Heart right ventricle (tissue), 16 donors: ENCODE measurements at regions of chr1 and their contacts with region 1.

Region 1: GRCh38 chr1:34786521-34787325 is 5.7 kb downstream of the GJB3 start:
- DNase-seq: peak; percentile 62 to 77
- ATAC-seq: peak; percentile 57 to 86 (median 80)
- H3K4me3 ChIP-seq: no peak overlapping the region
- H3K27ac ChIP-seq: peak overlapping the region in 1 of 10 donors; percentile 11
- H3K4me1 ChIP-seq: peaks cover 2 to 37% (median 15%) of the 10 kb centered on the region in 9 donors
- H3K27me3 ChIP-seq: peaks cover 10 to 21% (median 16%) of the 10 kb centered on the region in 7 donors
- CTCF ChIP-seq: peak; percentile 70 to 94 (median 86)

Region 2: GRCh38 chr1:34770891-34771508 is 15.7 kb before region 1 on chr1:
- intact Hi-C with region 1: no loop called
- DNase-seq: no peak
- ATAC-seq: no peak
- H3K4me3 ChIP-seq: no peak overlapping the region
- H3K27ac ChIP-seq: no peak overlapping the region
- H3K4me1 ChIP-seq: no peaks in the 10 kb centered on the region
- H3K27me3 ChIP-seq: peaks cover 0 to 40% (median 13%) of the 10 kb centered on the region in 7 donors
- CTCF ChIP-seq: no peak

Region 3: GRCh38 chr1:34844252-34844634 is 57.5 kb after region 1 on chr1:
- intact Hi-C with region 1: loop called in 1 of 10 experiments (anchors 1 kb)
- DNase-seq: peak in 1 of 2 donors; percentile 51
- ATAC-seq: peak; percentile 19 to 74 (median 50)
- H3K4me3 ChIP-seq: no peak overlapping the region
- H3K27ac ChIP-seq: peak overlapping the region; percentile 56 to 92 (median 77)
- H3K4me1 ChIP-seq: peaks cover 5 to 100% (median 64%) of the 10 kb centered on the region in 9 donors
- H3K27me3 ChIP-seq: no peaks in the 10 kb centered on the region
- CTCF ChIP-seq: no peak

Region 4: DNA sequence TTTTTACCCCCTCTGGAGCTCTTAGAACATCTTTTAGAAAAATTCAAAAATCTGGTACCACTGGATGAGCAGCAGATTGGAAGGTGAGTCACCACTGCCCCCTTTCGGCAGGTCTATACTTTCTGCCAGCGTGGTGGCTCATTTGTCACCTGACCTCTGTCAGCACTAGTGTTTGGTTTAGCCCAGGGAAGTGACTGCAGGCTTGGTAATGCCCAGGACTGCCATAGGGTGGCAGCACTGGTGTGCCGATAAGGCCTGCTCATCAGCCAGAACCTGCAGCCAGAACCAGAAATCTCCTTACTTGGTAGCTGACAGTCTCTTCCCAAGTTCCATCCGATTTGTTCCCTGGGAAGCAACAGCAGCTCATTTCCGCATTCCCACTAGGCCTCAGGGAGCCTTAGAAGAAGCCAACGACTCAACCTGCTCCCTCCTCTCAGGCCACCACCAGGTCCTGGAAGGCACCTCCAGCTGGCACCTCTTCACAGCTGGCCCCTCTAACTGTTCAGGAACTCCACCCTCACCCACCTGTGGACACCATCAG is 66.0 kb after region 1 on chr1:
- intact Hi-C with region 1: loop called (anchors 1 to 5 kb)
- DNase-seq: peak; percentile 85 to 91
- ATAC-seq: peak; percentile 86 to 97 (median 94)
- H3K4me3 ChIP-seq: no peak overlapping the region
- H3K27ac ChIP-seq: peak overlapping the region in 9 of 10 donors; percentile 12 to 71 (median 42)
- H3K4me1 ChIP-seq: peaks cover 8 to 67% (median 39%) of the 10 kb centered on the region in 9 donors
- H3K27me3 ChIP-seq: no peaks in the 10 kb centered on the region
- CTCF ChIP-seq: peak; percentile 93 to 98 (median 96)

Region 5: DNA sequence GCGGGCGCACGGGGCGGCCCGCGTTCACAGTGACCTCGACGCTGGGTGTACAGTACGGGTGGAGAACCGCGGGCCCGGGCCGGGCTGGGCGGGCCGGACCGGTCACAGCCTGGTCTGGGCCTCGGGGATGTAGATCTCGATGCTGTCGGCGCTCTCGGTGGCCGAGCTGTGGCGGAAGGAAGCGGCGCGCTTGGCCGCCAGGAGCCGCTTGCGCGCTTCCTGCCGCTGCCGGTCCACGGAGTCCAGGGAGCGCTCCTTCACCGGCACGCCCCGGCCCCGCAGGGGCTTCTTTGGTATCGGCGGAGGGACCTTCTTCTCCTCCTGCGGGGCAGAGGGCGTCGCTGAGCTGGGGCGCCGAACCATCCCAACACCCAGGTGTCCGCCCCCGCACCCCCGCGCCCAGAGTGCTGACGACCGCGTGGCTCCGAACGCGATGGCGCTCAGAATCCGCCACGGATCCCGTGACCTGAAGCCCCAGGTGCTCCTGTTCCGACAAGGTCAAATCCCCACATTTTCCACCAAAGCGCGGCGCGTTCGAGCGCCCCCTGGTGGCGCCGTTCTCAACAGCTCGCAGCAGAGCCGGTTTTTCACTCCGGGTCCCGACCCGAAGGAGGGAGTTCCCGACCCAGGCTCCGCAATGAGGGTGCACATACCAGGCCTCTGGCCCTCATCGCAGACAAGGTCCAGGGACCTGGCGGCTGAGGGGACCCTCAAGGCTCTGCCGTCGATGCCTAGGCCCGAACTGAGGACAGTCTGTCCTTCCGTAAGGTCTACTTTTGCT is 79.4 kb after region 1 on chr1:
- intact Hi-C with region 1: loop called in 6 of 10 experiments (anchors 1 to 5 kb)
- DNase-seq: peak; percentile 84 to 90
- ATAC-seq: peak; percentile 66 to 89 (median 79)
- H3K4me3 ChIP-seq: peak overlapping the region; percentile 59 to 89 (median 76)
- H3K27ac ChIP-seq: peak overlapping the region; percentile 36 to 90 (median 84)
- H3K4me1 ChIP-seq: peaks cover 0 to 23% (median 15%) of the 10 kb centered on the region in 9 donors
- H3K27me3 ChIP-seq: peaks cover 0 to 4% (median 0%) of the 10 kb centered on the region in 7 donors
- CTCF ChIP-seq: peak; percentile 95 to 99 (median 98)

Region 6: DNA sequence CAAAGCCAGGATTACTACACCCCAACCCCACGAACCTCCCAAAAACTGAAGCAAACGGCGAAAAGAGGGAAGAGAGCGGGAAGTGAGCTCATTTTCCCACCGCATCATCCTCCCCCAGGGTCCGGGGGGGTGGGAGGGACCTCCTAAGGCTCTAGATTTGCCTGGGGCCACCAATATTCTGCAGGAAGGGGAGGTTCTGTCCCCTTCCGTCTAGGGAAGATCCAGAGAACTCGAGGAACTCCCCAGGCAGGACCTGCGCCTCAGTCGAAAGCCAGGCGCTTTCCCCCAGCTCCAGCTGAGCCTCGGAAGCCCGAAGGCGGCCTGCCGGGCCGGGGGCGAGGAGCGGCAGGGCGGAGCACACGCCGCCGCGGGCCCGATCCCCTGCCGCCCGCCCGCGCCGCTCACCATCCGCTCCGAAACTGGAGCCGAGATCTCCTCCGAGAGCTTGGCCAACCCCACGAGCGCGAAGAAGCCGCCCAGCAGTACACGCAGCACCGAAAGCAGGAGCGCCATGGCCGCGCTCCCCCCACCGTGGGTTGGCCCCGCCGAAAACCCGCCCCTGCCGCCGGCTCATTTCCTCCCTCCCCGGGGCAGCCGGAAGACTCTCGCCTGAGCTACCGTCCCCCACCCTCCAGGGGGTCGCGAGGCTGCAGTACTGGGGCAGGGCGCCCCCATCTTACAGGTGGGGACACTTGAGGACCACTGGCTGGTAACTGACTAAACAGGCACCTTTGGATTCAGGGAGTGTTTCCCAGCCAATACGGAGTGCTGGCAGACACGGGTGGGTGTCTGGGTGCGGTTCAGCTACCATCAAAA is 198.3 kb after region 1 on chr1 and contains the start of gene TMEM35B:
- intact Hi-C with region 1: loop called in 2 of 10 experiments (anchors 5 kb)
- DNase-seq: peak; percentile 79 to 80
- ATAC-seq: peak; percentile 89 to 95 (median 94)
- H3K4me3 ChIP-seq: peak within 1 kb of the TSS; percentile 62 to 92 (median 81)
- H3K27ac ChIP-seq: peak within 1 kb of the TSS; percentile 80 to 98 (median 96)
- H3K4me1 ChIP-seq: peaks cover 5 to 34% (median 27%) of the 10 kb centered on the region in 9 donors
- H3K27me3 ChIP-seq: no peaks in the 10 kb centered on the region
- CTCF ChIP-seq: peak in 2 of 9 donors; percentile 9 to 14
- total RNA-seq, gene TMEM35B: 4.9 to 13.1 (median 6.6) TPM

Region 7: GRCh38 chr1:35316264-35316663 is 529.5 kb after region 1 on chr1:
- intact Hi-C with region 1: no loop called
- DNase-seq: no peak
- ATAC-seq: no peak
- H3K4me3 ChIP-seq: no peak overlapping the region
- H3K27ac ChIP-seq: no peak overlapping the region
- H3K4me1 ChIP-seq: peaks cover 0 to 23% (median 7%) of the 10 kb centered on the region in 9 donors
- H3K27me3 ChIP-seq: no peaks in the 10 kb centered on the region
- CTCF ChIP-seq: no peak